ENCODE measurements at regions of chr15 and their contacts with region 1.

Region 1: GRCh38 chr15:100627789-100628395 is 25.5 kb downstream of the ASB7 start:
- DNase-seq: peak; percentile 59 to 78
- H3K4me3 ChIP-seq: no peak overlapping the region
- H3K27ac ChIP-seq: peak overlapping the region; percentile 55
- H3K4me1 ChIP-seq: peaks cover 10% of the 10 kb centered on the region
- H3K27me3 ChIP-seq: no peaks in the 10 kb centered on the region
- CTCF ChIP-seq: peak; percentile 89

Region 2: GRCh38 chr15:100707229-100707628 is 79.3 kb after region 1 on chr15:
- CTCF ChIA-PET with region 1: no interaction called
- POLR2A ChIA-PET with region 1: no interaction called
- intact Hi-C with region 1: loop called (anchors 2 kb)
- DNase-seq: peak; percentile 80 to 94
- H3K4me3 ChIP-seq: no peak overlapping the region
- H3K27ac ChIP-seq: peak overlapping the region; percentile 63
- H3K4me1 ChIP-seq: peaks cover 60% of the 10 kb centered on the region
- H3K27me3 ChIP-seq: no peaks in the 10 kb centered on the region
- CTCF ChIP-seq: no peak

Region 3: GRCh38 chr15:100873029-100873677 is 245.3 kb after region 1 on chr15:
- CTCF ChIA-PET with region 1: interaction called, 9 read pairs
- POLR2A ChIA-PET with region 1: no interaction called
- intact Hi-C with region 1: loop called (anchors 1 kb)
- DNase-seq: peak; percentile 65 to 87
- H3K4me3 ChIP-seq: no peak overlapping the region
- H3K27ac ChIP-seq: no peak overlapping the region
- H3K4me1 ChIP-seq: peaks cover 17% of the 10 kb centered on the region
- H3K27me3 ChIP-seq: no peaks in the 10 kb centered on the region
- CTCF ChIP-seq: peak; percentile 95

Region 4: GRCh38 chr15:100918034-100918689 is 290.3 kb after region 1 on chr15:
- CTCF ChIA-PET with region 1: interaction called, 3 read pairs
- POLR2A ChIA-PET with region 1: no interaction called
- intact Hi-C with region 1: loop called (anchors 2 kb)
- DNase-seq: peak; percentile 80 to 89
- H3K4me3 ChIP-seq: peak overlapping the region; percentile 72
- H3K27ac ChIP-seq: no peak overlapping the region
- H3K4me1 ChIP-seq: no peaks in the 10 kb centered on the region
- H3K27me3 ChIP-seq: no peaks in the 10 kb centered on the region
- CTCF ChIP-seq: peak; percentile 85

Region 5: GRCh38 chr15:101008158-101009139 is 380.6 kb after region 1 on chr15:
- CTCF ChIA-PET with region 1: no interaction called
- POLR2A ChIA-PET with region 1: no interaction called
- intact Hi-C with region 1: loop called (anchors 1 kb)
- DNase-seq: peak; percentile 72 to 88
- H3K4me3 ChIP-seq: peak overlapping the region; percentile 67
- H3K27ac ChIP-seq: no peak overlapping the region
- H3K4me1 ChIP-seq: 0 out of 2 replicates have a peak, but pooled peaks cover 4% of the 10 kb centered on the region
- H3K27me3 ChIP-seq: no peaks in the 10 kb centered on the region
- CTCF ChIP-seq: peak; percentile 97

Region 6: GRCh38 chr15:101088788-101089583 is 461.1 kb after region 1 on chr15:
- CTCF ChIA-PET with region 1: no interaction called
- POLR2A ChIA-PET with region 1: no interaction called
- intact Hi-C with region 1: loop called (anchors 2 kb)
- DNase-seq: peak in 1 of 2 experiments; percentile 78
- H3K4me3 ChIP-seq: no peak overlapping the region; the same call in 1 of the 2 replicates
- H3K27ac ChIP-seq: no peak overlapping the region
- H3K4me1 ChIP-seq: no peaks in the 10 kb centered on the region
- H3K27me3 ChIP-seq: no peaks in the 10 kb centered on the region
- CTCF ChIP-seq: peak; percentile 96

Region 7: GRCh38 chr15:101258238-101259144 is 630.6 kb after region 1 on chr15:
- CTCF ChIA-PET with region 1: no interaction called
- POLR2A ChIA-PET with region 1: no interaction called
- intact Hi-C with region 1: loop called (anchors 5 kb)
- DNase-seq: peak in 1 of 2 experiments; percentile 48
- H3K4me3 ChIP-seq: no peak overlapping the region
- H3K27ac ChIP-seq: no peak overlapping the region
- H3K4me1 ChIP-seq: no peaks in the 10 kb centered on the region
- H3K27me3 ChIP-seq: peaks cover 11% of the 10 kb centered on the region
- CTCF ChIP-seq: peak; percentile 88